Heart left ventricle (tissue), 16 donors: ENCODE measurements at regions of chr6 and their contacts with region 1.

Region 1: GRCh38 chr6:13487122-13488014 is at the start of gene GFOD1:
- DNase-seq: peak; percentile 91 to 95 (median 92)
- ATAC-seq: peak; percentile 81 to 91 (median 86)
- H3K4me3 ChIP-seq: peak within 1 kb of the TSS; percentile 68 to 97 (median 90)
- H3K27ac ChIP-seq: peak within 1 kb of the TSS; percentile 86 to 98 (median 95)
- H3K4me1 ChIP-seq: peaks cover 0 to 47% (median 31%) of the 10 kb centered on the region in 12 donors
- H3K27me3 ChIP-seq: no peaks in the 10 kb centered on the region
- CTCF ChIP-seq: peak in 4 of 12 donors; percentile 21 to 36 (median 28)
- POLR2A ChIP-seq: peak; percentile 88 to 97
- total RNA-seq, gene GFOD1: 25.0 to 65.8 (median 41.9) TPM

Region 2: DNA sequence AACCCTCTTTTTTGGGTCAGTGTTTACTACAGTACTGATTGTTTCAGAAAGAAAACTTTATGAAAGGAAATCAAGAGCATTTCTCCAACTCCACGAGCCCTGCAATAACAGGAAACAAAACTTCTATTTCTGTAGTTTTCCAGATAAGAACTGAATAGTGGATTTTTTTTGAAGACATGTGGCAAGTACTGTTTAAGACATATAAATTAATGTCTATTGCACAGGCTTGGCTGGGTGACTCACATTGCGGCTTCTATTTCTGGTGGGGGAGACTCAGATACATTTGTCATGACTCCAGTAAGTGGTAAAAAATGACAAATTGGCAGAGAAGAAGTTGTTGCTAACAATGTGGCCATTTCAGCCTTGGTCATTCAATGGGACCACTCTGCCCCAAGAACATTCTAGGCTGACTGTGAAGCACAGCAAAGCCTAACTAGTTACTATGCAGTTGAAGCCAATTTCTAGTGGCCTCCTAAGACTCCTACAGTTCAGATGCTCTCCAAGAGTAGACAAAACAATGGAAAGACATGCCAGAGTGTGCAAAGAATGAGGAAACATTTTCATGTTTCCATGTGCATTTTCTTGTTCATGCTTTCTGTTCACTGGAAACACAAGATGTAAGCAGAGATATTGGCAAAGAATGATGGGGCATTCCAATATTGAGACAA is 996.3 kb before region 1 on chr6:
- intact Hi-C with region 1: no loop called
- DNase-seq: no peak
- ATAC-seq: no peak
- H3K4me3 ChIP-seq: no peak overlapping the region
- H3K27ac ChIP-seq: peak overlapping the region in 9 of 12 donors; percentile 19 to 68 (median 37)
- H3K4me1 ChIP-seq: peaks cover 0 to 19% (median 8%) of the 10 kb centered on the region in 12 donors
- H3K27me3 ChIP-seq: no peaks in the 10 kb centered on the region
- CTCF ChIP-seq: no peak
- POLR2A ChIP-seq: no peak

Region 3: GRCh38 chr6:13360671-13361550 is 126.5 kb before region 1 on chr6:
- intact Hi-C with region 1: loop called in 2 of 10 experiments (anchors 5 kb)
- DNase-seq: peak; percentile 44 to 89 (median 69)
- ATAC-seq: peak; percentile 85 to 92 (median 90)
- H3K4me3 ChIP-seq: no peak overlapping the region
- H3K27ac ChIP-seq: peak overlapping the region; percentile 18 to 84 (median 60)
- H3K4me1 ChIP-seq: peaks cover 11 to 71% (median 40%) of the 10 kb centered on the region in 12 donors
- H3K27me3 ChIP-seq: no peaks in the 10 kb centered on the region
- CTCF ChIP-seq: no peak
- POLR2A ChIP-seq: no peak

Region 4: GRCh38 chr6:13422681-13423221 is 64.6 kb before region 1 on chr6:
- intact Hi-C with region 1: loop called in 6 of 10 experiments (anchors 1 to 10 kb)
- DNase-seq: peak in 1 of 5 donors; percentile 39
- ATAC-seq: peak in 3 of 4 donors; percentile 32 to 46 (median 32)
- H3K4me3 ChIP-seq: no peak overlapping the region
- H3K27ac ChIP-seq: peak overlapping the region; percentile 1 to 88 (median 72)
- H3K4me1 ChIP-seq: peaks cover 33 to 100% (median 92%) of the 10 kb centered on the region in 12 donors
- H3K27me3 ChIP-seq: no peaks in the 10 kb centered on the region
- CTCF ChIP-seq: no peak
- POLR2A ChIP-seq: no peak

Region 5: GRCh38 chr6:13508711-13509705 is 21.6 kb after region 1 on chr6:
- intact Hi-C with region 1: no loop called
- DNase-seq: no peak
- ATAC-seq: peak in 2 of 4 donors; percentile 30 to 50
- H3K4me3 ChIP-seq: no peak overlapping the region
- H3K27ac ChIP-seq: peak overlapping the region in 7 of 12 donors; percentile 0 to 63 (median 28)
- H3K4me1 ChIP-seq: peaks cover 0 to 50% (median 19%) of the 10 kb centered on the region in 12 donors
- H3K27me3 ChIP-seq: no peaks in the 10 kb centered on the region
- CTCF ChIP-seq: no peak
- POLR2A ChIP-seq: no peak

Region 6: DNA sequence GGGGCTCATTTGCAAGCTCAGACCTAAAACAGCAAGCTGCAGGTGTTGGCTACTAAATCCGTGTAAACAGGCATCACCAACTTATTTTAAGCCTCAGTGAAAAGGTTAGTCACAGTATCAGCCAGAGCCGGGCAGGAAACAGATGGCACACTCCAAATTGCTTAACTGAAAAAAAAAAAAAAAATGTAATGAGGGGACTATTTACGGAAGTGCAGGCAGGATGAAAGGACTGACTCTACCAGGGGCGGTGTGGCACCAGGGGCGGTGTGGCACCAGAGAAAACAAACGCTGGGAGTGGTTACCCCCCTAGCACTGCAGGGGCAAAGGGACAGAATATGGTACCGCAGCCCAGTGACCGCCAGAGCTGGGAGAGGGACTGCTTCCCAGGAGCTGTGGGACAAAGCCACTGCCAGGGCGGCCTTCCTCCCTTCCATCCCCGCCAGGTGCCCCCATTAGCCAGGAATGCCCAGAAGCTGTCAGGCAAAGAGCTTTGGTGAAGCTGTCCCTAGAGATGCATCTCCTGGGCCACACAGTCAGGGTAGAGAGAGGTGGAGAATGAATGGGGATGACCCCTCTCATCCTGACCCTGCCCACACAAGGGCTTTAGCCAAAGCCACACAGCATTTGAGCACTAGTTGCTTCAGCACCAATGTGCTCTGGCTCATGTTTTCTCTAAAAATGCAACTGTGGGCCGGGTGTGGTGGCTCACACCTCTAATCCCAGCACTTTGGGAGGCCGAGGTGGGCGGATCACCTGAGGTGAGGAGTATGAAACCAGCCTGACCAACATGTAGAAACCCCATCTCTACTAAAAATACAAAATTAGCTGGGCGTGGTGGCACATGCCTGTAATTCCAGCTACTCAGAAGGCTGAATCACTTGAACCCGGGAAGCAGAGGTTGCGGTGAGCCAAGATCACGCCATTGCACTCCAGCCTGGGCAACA is 39.6 kb after region 1 on chr6:
- intact Hi-C with region 1: loop called in 5 of 10 experiments (anchors 2 to 5 kb)
- DNase-seq: peak in 3 of 5 donors; percentile 52 to 60 (median 53)
- ATAC-seq: peak; percentile 44 to 82 (median 66)
- H3K4me3 ChIP-seq: no peak overlapping the region
- H3K27ac ChIP-seq: peak overlapping the region; percentile 26 to 88 (median 76)
- H3K4me1 ChIP-seq: peaks cover 3 to 57% (median 34%) of the 10 kb centered on the region in 12 donors
- H3K27me3 ChIP-seq: no peaks in the 10 kb centered on the region
- CTCF ChIP-seq: peak in 1 of 12 donors; percentile 7
- POLR2A ChIP-seq: no peak

Region 7: GRCh38 chr6:13574149-13574570 is 86.8 kb after region 1 on chr6:
- intact Hi-C with region 1: loop called in 5 of 10 experiments (anchors 1 to 10 kb)
- DNase-seq: peak; percentile 94 to 96 (median 95)
- ATAC-seq: peak; percentile 96 to 97 (median 96)
- H3K4me3 ChIP-seq: peak overlapping the region; percentile 30 to 93 (median 85)
- H3K27ac ChIP-seq: peak overlapping the region; percentile 93 to 100 (median 98)
- H3K4me1 ChIP-seq: peaks cover 0 to 31% (median 15%) of the 10 kb centered on the region in 12 donors
- H3K27me3 ChIP-seq: no peaks in the 10 kb centered on the region
- CTCF ChIP-seq: peak; percentile 31 to 73 (median 50)
- POLR2A ChIP-seq: no peak